IMR-90 (cell line): ENCODE measurements at regions of chr12 and their contacts with region 1.

Region 1: DNA sequence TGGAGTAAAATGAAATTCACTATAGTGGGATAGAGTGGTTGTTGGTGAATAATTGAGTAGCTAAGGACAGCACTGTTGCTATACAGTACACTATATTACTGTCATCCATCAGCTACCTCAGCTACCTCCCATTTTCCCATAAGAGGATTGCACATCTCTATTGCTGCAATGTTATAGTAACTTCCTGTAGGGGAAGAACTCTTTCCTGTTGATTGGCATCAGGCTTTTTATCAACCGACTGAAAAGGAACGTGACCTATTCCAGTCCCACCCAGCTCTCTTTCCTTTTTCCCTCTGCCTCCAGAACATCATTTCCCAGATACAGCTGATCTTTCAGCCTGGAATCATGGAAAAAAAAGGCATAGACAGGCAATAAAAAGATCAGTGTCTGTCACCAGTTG is 117.4 kb downstream of the ADAMTS20 start:
- DNase-seq: no peak
- ATAC-seq: no peak
- H3K4me3 ChIP-seq: no peak overlapping the region
- H3K27ac ChIP-seq: no peak overlapping the region
- H3K4me1 ChIP-seq: no peaks in the 10 kb centered on the region
- H3K27me3 ChIP-seq: peaks cover 2% of the 10 kb centered on the region
- CTCF ChIP-seq: no peak
- POLR2A ChIP-seq: no peak
- RAD21 ChIP-seq: no peak

Region 2: DNA sequence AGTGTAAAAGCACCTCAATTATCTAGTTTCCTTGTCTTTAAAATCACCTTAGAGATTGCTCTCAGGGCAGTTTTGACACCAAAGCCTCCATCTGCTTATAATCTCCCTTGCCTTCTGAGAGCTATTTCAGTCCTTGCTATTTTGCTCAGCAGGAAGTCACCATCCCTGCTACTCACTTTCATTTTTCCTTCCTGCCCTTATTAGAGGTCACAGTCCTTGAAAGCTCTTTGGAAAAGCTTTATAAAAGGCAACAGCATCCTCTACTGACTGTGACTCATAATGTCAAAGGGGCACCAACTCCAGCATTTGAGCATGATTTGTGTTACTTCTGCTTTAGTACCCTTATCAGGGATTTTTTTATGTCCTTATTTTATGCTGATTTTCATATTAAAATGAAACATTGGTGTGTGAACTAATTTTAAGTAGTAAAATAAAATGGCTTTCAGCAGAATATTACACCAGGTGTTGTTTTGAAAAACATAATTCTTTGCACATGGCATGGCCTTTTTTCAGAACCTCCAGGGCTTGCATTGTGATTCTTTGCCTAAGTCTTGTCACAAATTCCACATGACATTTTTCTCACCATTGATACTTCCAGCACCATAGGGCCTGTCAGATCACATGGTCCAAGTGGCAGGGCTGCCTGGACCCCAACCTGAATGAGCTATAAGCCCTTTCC is 95.6 kb before region 1 on chr12:
- CTCF ChIA-PET with region 1: no interaction called
- POLR2A ChIA-PET with region 1: no interaction called
- dilution Hi-C with region 1: no loop called
- in situ Hi-C with region 1: no loop called
- intact Hi-C with region 1: no loop called
- DNase-seq: peak; percentile 76
- ATAC-seq: peak; percentile 92
- H3K4me3 ChIP-seq: no peak overlapping the region
- H3K27ac ChIP-seq: no peak overlapping the region
- H3K4me1 ChIP-seq: peaks cover 3% of the 10 kb centered on the region
- H3K27me3 ChIP-seq: no peaks in the 10 kb centered on the region
- CTCF ChIP-seq: peak; percentile 87
- POLR2A ChIP-seq: no peak
- RAD21 ChIP-seq: peak; percentile 88

Region 3: DNA sequence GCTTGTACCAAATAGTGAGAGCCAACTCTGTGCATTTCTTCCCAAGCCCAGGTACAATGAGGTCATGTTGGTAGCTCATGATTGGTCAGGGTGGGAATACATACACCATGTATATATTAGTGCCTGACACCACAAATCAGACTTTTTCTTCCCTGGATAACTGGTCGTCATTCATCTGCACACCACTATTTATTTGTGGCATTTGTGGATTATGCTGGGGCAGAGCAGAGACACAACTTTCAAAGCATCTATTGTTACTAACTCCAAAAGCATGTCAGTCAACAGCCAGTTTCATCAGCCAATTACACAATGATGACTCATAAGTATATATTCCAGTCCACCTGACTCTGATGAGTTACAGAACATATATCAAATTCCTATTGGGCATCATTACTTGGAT is 64.4 kb before region 1 on chr12:
- CTCF ChIA-PET with region 1: no interaction called
- POLR2A ChIA-PET with region 1: no interaction called
- dilution Hi-C with region 1: no loop called
- in situ Hi-C with region 1: no loop called
- intact Hi-C with region 1: loop called (anchors 5 kb)
- DNase-seq: peak; percentile 74
- ATAC-seq: no peak; the same call in 1 of the 2 replicates
- H3K4me3 ChIP-seq: no peak overlapping the region
- H3K27ac ChIP-seq: no peak overlapping the region
- H3K4me1 ChIP-seq: peaks cover 3% of the 10 kb centered on the region; the same call in 1 of the 2 replicates
- H3K27me3 ChIP-seq: peaks cover 1% of the 10 kb centered on the region; the same call in 1 of the 2 replicates
- CTCF ChIP-seq: no peak
- POLR2A ChIP-seq: no peak
- RAD21 ChIP-seq: no peak

Region 4: DNA sequence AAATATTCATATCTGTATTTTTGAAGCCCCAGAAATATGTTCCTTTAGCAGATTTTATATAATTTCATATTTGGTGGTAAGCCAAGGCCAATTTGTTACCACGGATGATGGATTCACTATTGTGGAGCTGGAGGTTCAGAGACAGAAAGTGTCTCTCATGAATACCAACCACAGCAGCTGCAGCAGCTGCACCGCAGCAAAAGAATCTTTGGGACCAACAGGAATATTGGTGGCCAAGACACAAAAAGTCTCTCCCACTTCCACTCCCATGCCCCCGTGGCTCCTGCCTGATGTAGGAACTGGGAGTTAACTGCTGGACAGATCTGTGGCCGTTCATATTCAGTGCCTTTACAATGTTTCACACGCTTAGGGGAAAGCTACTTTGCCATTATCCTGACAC is 37.9 kb before region 1 on chr12:
- CTCF ChIA-PET with region 1: no interaction called
- POLR2A ChIA-PET with region 1: no interaction called
- dilution Hi-C with region 1: no loop called
- in situ Hi-C with region 1: no loop called
- intact Hi-C with region 1: no loop called
- DNase-seq: no peak
- ATAC-seq: no peak
- H3K4me3 ChIP-seq: no peak overlapping the region
- H3K27ac ChIP-seq: no peak overlapping the region
- H3K4me1 ChIP-seq: no peaks in the 10 kb centered on the region
- H3K27me3 ChIP-seq: no peaks in the 10 kb centered on the region
- CTCF ChIP-seq: no peak
- POLR2A ChIP-seq: no peak
- RAD21 ChIP-seq: no peak

Region 5: GRCh38 chr12:43493261-43493797 is 58.7 kb after region 1 on chr12:
- CTCF ChIA-PET with region 1: no interaction called
- POLR2A ChIA-PET with region 1: no interaction called
- dilution Hi-C with region 1: no loop called
- in situ Hi-C with region 1: no loop called
- intact Hi-C with region 1: no loop called
- DNase-seq: no peak
- ATAC-seq: no peak
- H3K4me3 ChIP-seq: no peak overlapping the region
- H3K27ac ChIP-seq: no peak overlapping the region
- H3K4me1 ChIP-seq: no peaks in the 10 kb centered on the region
- H3K27me3 ChIP-seq: no peaks in the 10 kb centered on the region; the same call in 1 of the 2 replicates
- CTCF ChIP-seq: no peak
- POLR2A ChIP-seq: no peak
- RAD21 ChIP-seq: no peak

Region 6: GRCh38 chr12:43766291-43766690 is 331.7 kb after region 1 on chr12:
- CTCF ChIA-PET with region 1: no interaction called
- POLR2A ChIA-PET with region 1: no interaction called
- dilution Hi-C with region 1: no loop called
- in situ Hi-C with region 1: no loop called
- intact Hi-C with region 1: no loop called
- DNase-seq: peak; percentile 19
- ATAC-seq: peak; percentile 74
- H3K4me3 ChIP-seq: no peak overlapping the region
- H3K27ac ChIP-seq: no peak overlapping the region
- H3K4me1 ChIP-seq: peaks cover 6% of the 10 kb centered on the region
- H3K27me3 ChIP-seq: no peaks in the 10 kb centered on the region
- CTCF ChIP-seq: no peak
- POLR2A ChIP-seq: no peak
- RAD21 ChIP-seq: no peak